Activated naive CD4-positive, alpha-beta T cell treated with anti-CD3 and anti-CD28 coated beads for 36 hours (primary cell): ENCODE measurements at regions of chr5 and their contacts with region 1.

Region 1: GRCh38 chr5:65035211-65036206 is 266.8 kb downstream of the CWC27 start:
- DNase-seq: peak; percentile 80
- H3K4me3 Mint-ChIP-seq: peak overlapping the region; percentile 69
- H3K27ac Mint-ChIP-seq: peak overlapping the region; percentile 85
- H3K4me1 Mint-ChIP-seq: peaks cover 27% of the 10 kb centered on the region
- H3K27me3 Mint-ChIP-seq: no peaks in the 10 kb centered on the region

Region 2: DNA sequence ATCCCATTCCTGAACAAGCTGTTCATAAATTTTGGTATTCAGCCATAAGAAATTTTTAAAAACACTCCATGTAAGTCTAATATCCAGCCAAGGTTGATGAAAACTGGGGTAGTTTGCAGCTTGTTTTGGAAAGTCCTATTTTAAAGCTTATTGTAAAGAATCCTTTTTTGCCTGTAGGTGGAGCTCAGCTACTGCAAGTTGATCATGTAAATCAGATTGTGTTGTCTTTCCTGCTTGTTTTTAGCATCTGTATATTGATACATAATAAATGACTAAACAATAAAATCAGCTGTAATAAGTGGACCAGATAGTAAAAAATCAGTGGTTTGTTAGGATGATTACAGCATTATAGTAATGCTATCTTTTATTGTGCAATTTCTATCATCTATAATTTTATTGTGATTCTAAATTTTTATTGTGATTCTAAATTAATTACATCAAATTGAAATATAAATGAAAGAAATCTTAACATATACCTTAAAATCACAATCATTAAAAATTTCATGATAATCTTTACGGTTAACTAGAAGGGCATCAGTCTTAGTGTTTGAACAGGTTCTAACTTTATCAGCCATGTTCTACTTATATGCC is 224.4 kb before region 1 on chr5:
- CTCF ChIA-PET with region 1: interaction called, 3 read pairs
- intact Hi-C with region 1: loop called (anchors 5 kb)
- DNase-seq: peak; percentile 8
- H3K4me3 Mint-ChIP-seq: no peak overlapping the region
- H3K27ac Mint-ChIP-seq: no peak overlapping the region
- H3K4me1 Mint-ChIP-seq: peaks cover 4% of the 10 kb centered on the region
- H3K27me3 Mint-ChIP-seq: no peaks in the 10 kb centered on the region

Region 3: GRCh38 chr5:64900618-64901017 is 134.9 kb before region 1 on chr5:
- CTCF ChIA-PET with region 1: no interaction called
- intact Hi-C with region 1: no loop called
- DNase-seq: no peak
- H3K4me3 Mint-ChIP-seq: no peak overlapping the region
- H3K27ac Mint-ChIP-seq: no peak overlapping the region
- H3K4me1 Mint-ChIP-seq: no peaks in the 10 kb centered on the region
- H3K27me3 Mint-ChIP-seq: no peaks in the 10 kb centered on the region

Region 4: DNA sequence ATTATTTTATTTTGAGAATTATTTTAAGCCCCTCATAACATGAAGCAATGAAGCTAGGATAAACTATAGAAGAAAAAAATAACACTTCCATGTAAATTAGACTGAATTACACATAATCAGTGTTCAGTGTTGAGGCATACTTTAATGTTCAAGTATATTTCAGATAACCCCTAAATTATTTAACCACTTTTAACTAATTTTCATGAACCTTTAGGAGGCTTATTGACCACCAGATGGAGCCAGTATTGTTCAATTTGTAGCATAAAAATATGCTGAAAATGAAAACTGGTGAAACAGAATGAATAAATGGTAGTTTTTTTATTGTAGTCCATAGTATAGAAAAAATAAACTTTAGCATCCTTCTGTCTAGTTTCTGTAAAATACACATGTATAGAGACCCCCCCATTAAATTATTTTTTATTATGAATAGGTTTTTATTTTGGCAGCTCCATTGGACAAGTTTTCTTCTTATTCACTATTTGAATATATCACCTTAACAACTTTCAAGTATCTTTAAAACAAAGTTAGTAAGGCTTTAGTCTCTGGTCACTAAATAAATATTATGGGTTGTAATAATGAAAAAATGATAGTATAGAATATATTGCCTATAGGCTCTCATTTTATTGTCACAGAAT is 76.6 kb before region 1 on chr5:
- CTCF ChIA-PET with region 1: no interaction called
- intact Hi-C with region 1: loop called (anchors 2 kb)
- DNase-seq: no peak
- H3K4me3 Mint-ChIP-seq: no peak overlapping the region
- H3K27ac Mint-ChIP-seq: no peak overlapping the region
- H3K4me1 Mint-ChIP-seq: no peaks in the 10 kb centered on the region
- H3K27me3 Mint-ChIP-seq: no peaks in the 10 kb centered on the region

Region 5: GRCh38 chr5:65021527-65022226 is 13.8 kb before region 1 on chr5:
- CTCF ChIA-PET with region 1: no interaction called
- intact Hi-C with region 1: loop called (anchors 1 kb)
- DNase-seq: no peak
- H3K4me3 Mint-ChIP-seq: no peak overlapping the region
- H3K27ac Mint-ChIP-seq: no peak overlapping the region
- H3K4me1 Mint-ChIP-seq: peaks cover 16% of the 10 kb centered on the region
- H3K27me3 Mint-ChIP-seq: no peaks in the 10 kb centered on the region

Region 6: GRCh38 chr5:65102828-65103711 is 67.6 kb after region 1 on chr5:
- CTCF ChIA-PET with region 1: no interaction called
- intact Hi-C with region 1: loop called (anchors 1 kb)
- DNase-seq: peak; percentile 39
- H3K4me3 Mint-ChIP-seq: peak overlapping the region; percentile 73
- H3K27ac Mint-ChIP-seq: peak overlapping the region; percentile 33
- H3K4me1 Mint-ChIP-seq: peaks cover 41% of the 10 kb centered on the region
- H3K27me3 Mint-ChIP-seq: peaks cover 2% of the 10 kb centered on the region

Region 7: GRCh38 chr5:65290677-65291076 is 255.2 kb after region 1 on chr5:
- CTCF ChIA-PET with region 1: no interaction called
- intact Hi-C with region 1: no loop called
- DNase-seq: no peak
- H3K4me3 Mint-ChIP-seq: no peak overlapping the region
- H3K27ac Mint-ChIP-seq: no peak overlapping the region
- H3K4me1 Mint-ChIP-seq: no peaks in the 10 kb centered on the region
- H3K27me3 Mint-ChIP-seq: no peaks in the 10 kb centered on the region

Region 8: GRCh38 chr5:65334077-65334476 is 298.6 kb after region 1 on chr5:
- CTCF ChIA-PET with region 1: no interaction called
- intact Hi-C with region 1: no loop called
- DNase-seq: no peak
- H3K4me3 Mint-ChIP-seq: no peak overlapping the region
- H3K27ac Mint-ChIP-seq: no peak overlapping the region
- H3K4me1 Mint-ChIP-seq: no peaks in the 10 kb centered on the region
- H3K27me3 Mint-ChIP-seq: peaks cover 3% of the 10 kb centered on the region

Region 9: DNA sequence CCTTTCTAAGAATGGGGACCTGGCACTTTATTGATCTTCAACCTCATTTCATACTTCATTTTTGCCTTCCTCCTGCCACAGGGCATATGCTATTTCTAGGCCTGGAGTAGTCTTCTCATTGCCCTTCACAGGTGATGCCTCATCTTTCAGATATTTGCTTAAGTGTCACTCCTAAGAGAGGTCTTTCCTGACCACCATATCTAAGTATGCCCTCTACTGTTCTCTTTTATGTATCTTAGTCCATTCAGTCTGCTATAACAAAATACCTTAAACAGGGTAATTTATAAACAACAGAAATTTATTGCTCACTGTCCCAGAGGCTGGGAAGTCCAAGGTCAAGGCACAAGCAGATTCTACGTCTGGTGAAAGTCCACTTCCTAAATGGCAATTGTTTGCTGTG is 347.1 kb after region 1 on chr5:
- CTCF ChIA-PET with region 1: no interaction called
- intact Hi-C with region 1: no loop called
- DNase-seq: no peak
- H3K4me3 Mint-ChIP-seq: no peak overlapping the region
- H3K27ac Mint-ChIP-seq: no peak overlapping the region
- H3K4me1 Mint-ChIP-seq: no peaks in the 10 kb centered on the region
- H3K27me3 Mint-ChIP-seq: no peaks in the 10 kb centered on the region

Region 10: DNA sequence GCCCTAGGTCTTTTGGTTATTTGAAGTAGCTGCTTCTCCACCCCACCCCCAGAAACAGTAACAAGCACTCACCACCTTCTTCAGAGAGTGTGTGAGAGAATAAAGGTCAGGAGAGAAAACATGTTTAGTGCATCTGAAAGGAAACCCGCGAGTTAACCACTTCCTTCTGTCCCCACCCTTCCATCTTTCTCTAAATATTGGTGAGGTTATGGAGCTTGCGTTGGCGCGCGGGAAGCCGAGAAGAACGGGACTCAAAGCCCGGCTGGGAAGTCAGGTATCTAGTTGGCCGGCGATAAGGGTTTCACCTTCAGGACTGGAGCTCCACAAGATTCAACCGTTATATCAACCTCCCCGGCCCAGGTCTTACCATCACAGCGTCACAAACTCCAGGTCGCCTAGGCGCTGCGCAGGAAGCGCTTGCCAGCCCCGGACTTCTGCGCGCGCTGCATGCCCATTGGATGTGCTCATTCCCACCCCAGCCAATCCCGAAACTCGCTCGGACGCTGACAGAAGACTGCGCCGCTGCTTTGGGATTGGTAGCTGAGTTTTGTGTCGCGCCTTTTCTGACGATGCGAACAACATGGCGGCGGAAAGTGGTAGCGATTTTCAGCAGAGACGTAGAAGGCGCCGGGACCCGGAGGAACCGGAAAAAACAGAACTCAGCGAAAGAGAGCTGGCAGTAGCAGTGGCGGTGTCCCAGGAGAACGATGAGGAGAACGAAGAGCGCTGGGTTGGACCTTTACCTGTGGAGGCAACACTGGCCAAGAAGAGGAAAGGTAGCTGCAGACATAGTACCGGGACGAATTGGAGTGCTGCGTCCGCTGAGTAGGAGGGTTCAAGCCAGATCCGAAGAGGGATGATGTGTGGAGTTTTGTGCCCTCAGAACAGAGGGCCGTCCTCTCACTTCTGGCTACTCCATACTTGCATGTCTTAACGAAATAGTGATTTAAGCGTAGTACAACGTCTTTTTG is 527.5 kb after region 1 on chr5 and contains the starts of genes CENPK and PPWD1:
- CTCF ChIA-PET with region 1: no interaction called
- intact Hi-C with region 1: loop called (anchors 2 kb)
- DNase-seq: peak; percentile 98
- H3K4me3 Mint-ChIP-seq: peak within 1 kb of the TSS; percentile 98
- H3K27ac Mint-ChIP-seq: peak within 1 kb of the TSS; percentile 96
- H3K4me1 Mint-ChIP-seq: peaks cover 45% of the 10 kb centered on the region
- H3K27me3 Mint-ChIP-seq: no peaks in the 10 kb centered on the region
- total RNA-seq, gene CENPK: 80.9 to 83.1 TPM
- total RNA-seq, gene PPWD1: 33.6 to 33.9 TPM

Region 11: DNA sequence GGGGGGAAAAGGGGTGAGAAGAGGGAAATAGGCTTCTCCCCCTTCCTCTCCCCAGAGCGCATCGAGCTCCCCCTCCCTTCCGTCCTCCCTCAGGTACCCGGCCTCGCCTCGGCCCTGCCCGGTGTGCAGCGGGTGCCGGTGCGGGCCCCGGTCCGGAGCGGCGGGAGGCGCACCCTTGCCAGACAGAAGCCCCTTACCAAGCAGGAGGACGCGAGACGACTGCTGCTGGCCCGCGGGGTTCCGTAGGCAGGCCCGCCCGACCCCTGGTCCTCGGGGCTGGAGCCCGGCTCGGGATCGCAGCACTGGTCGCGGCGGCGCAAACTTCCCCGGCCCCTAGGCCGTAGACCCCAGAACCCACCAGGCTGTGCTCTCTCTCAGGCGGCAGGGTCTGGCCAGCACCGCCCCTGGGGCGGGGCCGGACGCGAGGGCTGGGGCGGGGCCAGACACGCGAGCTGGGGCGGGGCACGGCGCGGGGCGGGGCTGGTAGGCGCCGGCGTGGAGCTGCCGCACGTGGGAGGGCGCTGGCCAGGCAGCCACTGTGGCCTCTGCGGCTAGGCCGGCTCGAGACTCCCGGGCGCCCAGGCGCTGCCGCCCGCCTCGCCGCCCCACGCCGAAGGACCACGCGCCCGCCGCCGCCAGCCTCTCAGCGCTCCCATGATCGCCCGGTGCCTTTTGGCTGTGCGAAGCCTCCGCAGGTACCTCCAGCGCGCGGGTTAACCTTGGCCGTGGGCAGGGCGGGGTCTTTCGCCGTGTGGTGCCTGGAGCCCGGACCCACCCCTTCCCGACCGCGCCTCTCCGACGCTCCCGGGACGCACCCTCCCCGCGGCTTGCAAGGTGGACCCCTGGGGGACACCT is 686.4 kb after region 1 on chr5 and contains the starts of genes NLN and SGTB:
- CTCF ChIA-PET with region 1: no interaction called
- intact Hi-C with region 1: loop called (anchors 5 kb)
- DNase-seq: peak; percentile 80
- H3K4me3 Mint-ChIP-seq: peak within 1 kb of the TSS; percentile 88
- H3K27ac Mint-ChIP-seq: peak within 1 kb of the TSS; percentile 94
- H3K4me1 Mint-ChIP-seq: peaks cover 13% of the 10 kb centered on the region
- H3K27me3 Mint-ChIP-seq: no peaks in the 10 kb centered on the region
- total RNA-seq, gene NLN: 32.4 to 35.5 TPM
- total RNA-seq, gene SGTB: 16.1 to 17.3 TPM